ENCODE measurements at regions of chr19 and their contacts with region 1.

Region 1: DNA sequence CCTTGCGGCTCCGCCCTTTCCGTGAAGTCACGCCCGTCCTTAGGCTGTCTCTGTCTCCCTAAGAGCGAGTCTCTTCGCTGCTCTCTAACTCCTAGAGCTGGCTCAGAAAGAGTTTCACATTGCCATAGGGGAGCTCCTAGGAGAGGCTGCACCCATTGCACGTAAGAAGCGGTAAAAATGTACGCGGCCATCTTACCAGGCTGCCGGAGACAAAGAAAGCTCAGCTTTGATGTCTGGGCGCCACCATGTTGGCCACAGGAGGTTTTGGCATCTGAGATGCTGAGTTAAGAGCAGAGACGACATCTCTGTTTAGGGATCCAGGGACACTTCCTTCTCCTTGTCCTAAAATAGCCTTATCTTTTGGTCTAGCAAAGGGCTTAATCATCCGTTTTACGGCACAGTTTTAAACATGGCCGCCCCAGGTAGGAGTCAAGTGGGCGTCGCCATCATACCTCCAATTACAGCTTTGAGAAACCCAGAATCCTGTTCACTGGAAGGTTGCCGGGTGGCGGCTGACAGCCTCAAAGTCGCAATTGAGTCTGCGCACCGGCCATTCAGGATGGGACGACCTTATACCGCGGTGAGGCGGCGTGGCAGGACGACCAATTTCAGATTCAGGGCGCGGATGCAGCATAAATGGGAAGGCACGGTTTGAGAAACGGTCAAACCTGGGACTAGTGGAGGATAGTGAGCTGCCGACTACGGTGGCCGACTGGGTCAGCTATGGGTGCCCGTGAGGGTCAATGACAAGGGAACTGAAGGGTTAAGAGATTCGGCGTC is at the start of gene ZNF793:
- DNase-seq: peak; percentile 75
- H3K4me3 ChIP-seq: peak within 1 kb of the TSS; percentile 71 to 82
- H3K27ac ChIP-seq: peak within 1 kb of the TSS; percentile 82 to 99
- H3K4me1 ChIP-seq: peaks cover 0 to 14% of the 10 kb centered on the region in 2 experiments; a peak in 2 of 4 replicates
- H3K27me3 ChIP-seq: no peaks in the 10 kb centered on the region
- CTCF ChIP-seq: no peak
- EP300 ChIP-seq: no peak
- RAD21 ChIP-seq: no peak
- polyA plus RNA-seq, gene ZNF793: 2.3 and 4.1 TPM in 2 replicates

Region 2: DNA sequence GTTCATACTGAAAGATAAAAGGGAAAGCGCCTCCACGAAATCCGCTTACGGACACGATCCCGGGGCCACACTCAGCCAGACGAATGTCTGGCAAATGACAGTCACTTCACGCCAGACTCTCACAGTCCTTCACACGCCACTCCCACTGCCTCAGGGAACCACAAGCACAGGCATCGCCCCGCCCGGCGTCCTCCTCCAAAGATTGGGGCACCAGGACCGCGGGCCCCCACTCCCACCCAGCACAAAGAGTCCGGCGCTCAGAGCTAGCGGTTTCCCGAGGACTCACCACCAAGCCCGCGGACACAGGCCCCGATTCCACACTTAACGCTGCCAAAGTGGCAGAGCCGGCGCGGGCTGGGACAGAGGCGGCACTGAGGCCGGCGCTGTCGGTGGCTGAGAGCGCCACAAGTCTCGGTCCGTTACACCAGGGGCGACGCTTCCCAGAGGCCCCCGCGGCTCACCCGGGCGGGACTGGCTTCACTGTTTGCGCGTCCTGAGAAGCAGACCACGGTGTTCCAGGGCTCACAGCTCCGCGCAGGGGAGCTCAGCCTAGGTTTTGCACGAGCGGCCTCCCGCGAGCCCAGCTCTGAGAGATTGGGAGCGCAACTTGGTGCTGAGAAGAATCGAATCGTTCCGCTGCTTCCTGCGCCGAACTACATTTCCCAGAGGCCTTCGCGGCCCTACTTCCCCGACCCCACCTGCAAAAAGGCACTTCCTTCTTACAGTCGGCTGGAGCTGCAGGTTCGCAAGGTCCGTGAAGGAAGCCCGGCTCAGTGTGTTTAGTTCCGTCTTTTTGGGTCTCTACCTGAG is 39.6 kb before region 1 on chr19 and contains the start of gene ZNF569:
- CTCF ChIA-PET with region 1: interaction called, 4 read pairs
- POLR2A ChIA-PET with region 1: interaction called, 18 read pairs
- DNase-seq: peak; percentile 81
- H3K4me3 ChIP-seq: peak within 1 kb of the TSS; percentile 91
- H3K27ac ChIP-seq: peak within 1 kb of the TSS; percentile 78 to 97
- H3K4me1 ChIP-seq: peaks cover 0 to 9% of the 10 kb centered on the region in 2 experiments; a peak in 2 of 4 replicates
- H3K27me3 ChIP-seq: no peaks in the 10 kb centered on the region
- CTCF ChIP-seq: no peak
- EP300 ChIP-seq: no peak
- RAD21 ChIP-seq: no peak
- polyA plus RNA-seq, gene ZNF569: 2.0 and 2.5 TPM in 2 replicates

Region 3: DNA sequence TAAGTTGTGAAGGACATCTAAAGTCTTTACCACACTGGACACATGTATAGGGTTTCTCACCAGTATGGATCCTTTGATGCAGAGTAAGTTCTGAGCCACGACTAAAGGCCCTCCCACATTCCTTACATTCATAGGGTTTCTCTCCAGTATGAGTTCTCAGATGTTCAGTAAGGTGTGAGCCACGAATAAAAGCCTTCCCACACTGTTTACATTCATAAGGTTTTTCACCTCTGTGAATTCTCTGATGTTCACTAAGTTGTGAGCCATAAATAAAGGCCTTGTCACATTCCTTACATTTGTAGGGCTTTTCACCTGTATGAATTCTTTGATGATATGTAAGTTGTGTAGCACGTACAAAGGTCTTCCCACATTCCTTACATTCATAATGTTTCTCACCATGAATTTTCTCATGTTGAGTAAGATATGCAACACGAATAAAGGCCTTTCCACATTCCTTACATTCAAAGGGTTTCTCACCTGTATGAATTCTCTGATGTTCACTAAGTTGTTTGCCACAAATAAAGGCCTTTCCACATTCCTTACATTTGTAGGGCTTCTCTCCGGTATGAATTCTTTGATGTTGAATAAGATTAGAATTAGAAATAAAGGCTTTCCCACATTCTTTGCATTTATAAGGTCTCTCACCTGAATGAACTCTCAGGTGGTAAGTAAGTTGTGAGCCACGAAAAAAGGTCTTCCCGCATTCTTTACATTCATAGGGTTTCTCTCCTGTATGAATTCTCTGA is 58.2 kb after region 1 on chr19:
- CTCF ChIA-PET with region 1: no interaction called
- POLR2A ChIA-PET with region 1: no interaction called
- DNase-seq: no peak
- H3K4me3 ChIP-seq: no peak overlapping the region; a peak in 1 of 4 replicates
- H3K27ac ChIP-seq: no peak overlapping the region
- H3K4me1 ChIP-seq: no peaks in the 10 kb centered on the region
- H3K27me3 ChIP-seq: no peaks in the 10 kb centered on the region
- CTCF ChIP-seq: no peak
- EP300 ChIP-seq: no peak
- RAD21 ChIP-seq: no peak

Region 4: GRCh38 chr19:37594304-37594981 is 87.9 kb after region 1 on chr19 and contains the starts of genes ZNF540 and ZNF571:
- CTCF ChIA-PET with region 1: no interaction called
- POLR2A ChIA-PET with region 1: interaction called, 14 read pairs
- DNase-seq: peak; percentile 87
- H3K4me3 ChIP-seq: peak within 1 kb of the TSS; percentile 88 to 97
- H3K27ac ChIP-seq: peak within 1 kb of the TSS; percentile 37 to 79; a peak in 3 of 4 replicates
- H3K4me1 ChIP-seq: peaks cover 0 to 5% of the 10 kb centered on the region in 2 experiments; a peak in 2 of 4 replicates
- H3K27me3 ChIP-seq: no peaks in the 10 kb centered on the region
- CTCF ChIP-seq: no peak
- EP300 ChIP-seq: no peak
- RAD21 ChIP-seq: no peak
- polyA plus RNA-seq, gene ZNF540: 0.08 TPM in 2 replicates
- polyA plus RNA-seq, gene ZNF571: 1.1 and 3.0 TPM in 2 replicates